Dendritic cell treated with granulocyte-macrophage colony-stimulating factor and Interleukin-4, amounts not matched to agents 40 ng/mL and 50 ng/mL, for 4 days (primary cell): ENCODE measurements at regions of chr10 and their contacts with region 1.

Region 1: GRCh38 chr10:52779541-52780390 is 7.2 kb upstream of the MBL2 start:
- H3K4me3 Mint-ChIP-seq: no peak overlapping the region
- H3K27ac Mint-ChIP-seq: no peak overlapping the region
- H3K4me1 Mint-ChIP-seq: no peaks in the 10 kb centered on the region
- H3K27me3 Mint-ChIP-seq: peaks cover 8% of the 10 kb centered on the region

Region 2: GRCh38 chr10:52644373-52645186 is 135.2 kb before region 1 on chr10:
- intact Hi-C with region 1: loop called (anchors 1 kb)
- H3K4me3 Mint-ChIP-seq: no peak overlapping the region
- H3K27ac Mint-ChIP-seq: no peak overlapping the region
- H3K4me1 Mint-ChIP-seq: no peaks in the 10 kb centered on the region
- H3K27me3 Mint-ChIP-seq: no peaks in the 10 kb centered on the region

Region 3: DNA sequence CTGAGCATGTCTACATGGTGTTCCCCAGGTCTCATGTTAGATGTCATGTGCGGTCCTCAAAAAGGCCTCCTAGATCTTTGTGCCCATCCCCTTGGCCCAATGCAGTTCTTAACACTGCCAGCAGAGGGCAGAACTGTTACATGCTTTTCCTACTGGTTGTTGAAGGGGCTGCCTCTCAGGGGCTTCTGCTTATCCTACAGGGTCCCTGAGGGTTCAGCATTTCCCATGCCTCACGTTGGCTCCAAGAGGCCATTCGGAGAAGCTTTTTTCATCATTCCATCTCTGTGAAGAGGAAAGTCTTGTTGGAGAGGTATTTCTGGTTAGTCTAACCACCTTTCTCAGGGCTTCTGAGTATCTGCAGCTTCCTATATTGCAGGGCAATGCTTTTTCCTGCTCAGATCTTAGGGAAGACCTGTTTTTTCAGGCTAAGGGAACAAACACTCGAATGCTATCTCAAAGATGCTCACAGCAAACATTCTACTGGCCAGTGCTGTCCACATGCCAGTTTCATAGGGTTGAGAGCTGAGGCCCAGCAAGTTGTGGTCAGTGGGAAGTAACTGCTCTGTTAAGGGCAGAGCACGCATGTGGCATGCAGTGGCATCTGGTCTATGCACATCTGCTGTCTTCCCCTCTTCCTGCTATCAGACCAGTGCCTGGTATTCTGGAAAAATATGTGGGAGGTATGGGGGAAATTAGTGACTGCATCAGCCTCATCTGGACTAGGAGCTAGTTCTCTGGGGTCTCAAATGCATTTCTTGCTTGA is 38.7 kb before region 1 on chr10:
- intact Hi-C with region 1: loop called (anchors 1 kb)
- H3K4me3 Mint-ChIP-seq: no peak overlapping the region
- H3K27ac Mint-ChIP-seq: no peak overlapping the region
- H3K4me1 Mint-ChIP-seq: no peaks in the 10 kb centered on the region
- H3K27me3 Mint-ChIP-seq: no peaks in the 10 kb centered on the region